AG04450 (cell line): ENCODE measurements at regions of chr5 and their contacts with region 1.

Region 1: GRCh38 chr5:96752341-96753016 is 55.3 kb downstream of the ERAP1 start:
- DNase-seq: peak; percentile 60
- H3K4me3 ChIP-seq: no peak overlapping the region
- H3K27ac ChIP-seq: no peak overlapping the region
- H3K27me3 ChIP-seq: no peaks in the 10 kb centered on the region
- CTCF ChIP-seq: peak; percentile 67

Region 2: GRCh38 chr5:96536991-96537785 is 215.3 kb before region 1 on chr5:
- CTCF ChIA-PET with region 1: no interaction called
- POLR2A ChIA-PET with region 1: no interaction called
- DNase-seq: no peak
- H3K4me3 ChIP-seq: no peak overlapping the region
- H3K27ac ChIP-seq: no peak overlapping the region
- H3K27me3 ChIP-seq: no peaks in the 10 kb centered on the region
- CTCF ChIP-seq: no peak

Region 3: DNA sequence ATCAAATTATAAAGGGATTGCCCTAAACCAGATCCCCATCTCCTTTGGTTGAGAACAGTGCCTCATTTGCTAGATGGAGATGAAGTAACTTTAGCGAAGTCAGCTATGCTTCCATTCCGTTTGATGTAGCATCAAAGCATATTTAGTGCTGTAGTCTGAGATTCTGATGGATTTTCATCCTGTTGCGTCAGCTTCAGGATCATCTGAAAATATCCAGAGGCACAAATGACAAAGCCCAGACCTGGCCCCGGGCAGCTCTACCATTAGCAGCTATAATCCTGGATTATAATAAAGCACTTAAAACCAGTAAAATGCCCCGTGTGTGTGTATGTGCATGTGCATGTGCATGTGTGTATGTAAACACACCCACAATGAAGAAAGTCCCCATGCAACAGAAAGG is 10.5 kb after region 1 on chr5:
- CTCF ChIA-PET with region 1: interaction called, 23 read pairs
- POLR2A ChIA-PET with region 1: no interaction called
- DNase-seq: no peak
- H3K4me3 ChIP-seq: no peak overlapping the region
- H3K27ac ChIP-seq: no peak overlapping the region
- H3K27me3 ChIP-seq: no peaks in the 10 kb centered on the region
- CTCF ChIP-seq: no peak

Region 4: DNA sequence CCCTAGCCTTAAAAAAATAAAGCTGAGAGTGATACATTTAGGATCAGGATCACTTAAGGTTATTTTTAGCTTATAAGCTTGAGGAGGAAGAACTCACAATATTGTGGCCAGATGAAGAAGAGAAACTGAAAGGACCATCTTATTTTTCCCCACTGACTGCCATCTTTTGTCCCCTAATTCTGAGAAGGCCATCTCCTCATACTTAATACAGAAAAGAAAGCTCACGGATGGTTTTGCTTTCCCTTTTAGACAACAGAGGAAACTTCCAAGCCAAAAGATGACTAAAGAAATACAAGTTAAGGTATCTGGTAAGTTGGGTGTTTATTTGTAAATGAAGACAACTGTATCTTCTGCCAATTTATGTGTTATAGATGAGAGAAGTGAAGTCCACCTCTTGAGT is 18.9 kb after region 1 on chr5:
- CTCF ChIA-PET with region 1: interaction called, 28 read pairs
- POLR2A ChIA-PET with region 1: no interaction called
- DNase-seq: no peak
- H3K4me3 ChIP-seq: no peak overlapping the region
- H3K27ac ChIP-seq: no peak overlapping the region
- H3K27me3 ChIP-seq: no peaks in the 10 kb centered on the region
- CTCF ChIP-seq: no peak

Region 5: GRCh38 chr5:96776621-96777020 is 24.1 kb after region 1 on chr5:
- CTCF ChIA-PET with region 1: interaction called, 28 read pairs
- POLR2A ChIA-PET with region 1: no interaction called
- DNase-seq: no peak
- H3K4me3 ChIP-seq: no peak overlapping the region
- H3K27ac ChIP-seq: no peak overlapping the region
- H3K27me3 ChIP-seq: no peaks in the 10 kb centered on the region
- CTCF ChIP-seq: no peak

Region 6: DNA sequence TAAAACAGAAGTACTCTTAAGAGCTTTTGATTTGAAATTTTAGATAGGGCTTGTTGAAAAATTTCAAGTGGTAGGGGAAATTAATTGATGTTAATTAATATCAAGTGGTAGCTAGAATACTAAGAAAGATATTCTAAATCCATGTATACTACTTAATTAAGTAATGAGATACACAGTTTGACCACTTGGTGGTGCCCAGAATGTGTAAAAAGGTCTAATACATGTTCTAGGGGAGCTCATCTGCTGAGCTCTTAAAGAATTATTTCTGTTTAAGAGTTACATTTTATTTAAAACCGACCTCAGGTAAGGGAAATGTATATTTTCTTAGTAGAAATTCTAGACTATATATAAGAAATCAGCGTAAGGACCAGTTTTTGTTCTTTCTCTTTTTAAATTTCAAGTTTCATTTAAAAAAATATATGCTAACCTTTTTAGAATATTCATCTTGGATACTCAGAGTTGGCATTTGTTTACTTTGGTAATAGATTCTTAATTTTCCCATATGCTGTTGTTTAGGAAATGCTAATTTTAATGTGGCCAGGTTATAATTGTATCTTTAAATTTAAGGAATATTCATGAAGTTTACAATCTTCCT is 244.9 kb after region 1 on chr5:
- CTCF ChIA-PET with region 1: interaction called, 10 read pairs
- POLR2A ChIA-PET with region 1: no interaction called
- DNase-seq: no peak
- H3K4me3 ChIP-seq: no peak overlapping the region
- H3K27ac ChIP-seq: no peak overlapping the region
- H3K27me3 ChIP-seq: no peaks in the 10 kb centered on the region
- CTCF ChIP-seq: peak; percentile 51

Region 7: GRCh38 chr5:97142521-97143254 is 390.2 kb after region 1 on chr5 and contains the start of gene LIX1:
- CTCF ChIA-PET with region 1: interaction called, 19 read pairs
- POLR2A ChIA-PET with region 1: no interaction called
- DNase-seq: no peak
- H3K4me3 ChIP-seq: no peak within 1 kb of the TSS
- H3K27ac ChIP-seq: no peak within 1 kb of the TSS
- H3K27me3 ChIP-seq: peaks cover 14% of the 10 kb centered on the region
- CTCF ChIP-seq: peak; percentile 64
- polyA plus RNA-seq, gene LIX1: not detected in 2 replicates

Region 8: GRCh38 chr5:97162045-97162444 is 409.6 kb after region 1 on chr5:
- CTCF ChIA-PET with region 1: interaction called, 58 read pairs
- POLR2A ChIA-PET with region 1: no interaction called
- DNase-seq: peak; percentile 69
- H3K4me3 ChIP-seq: no peak overlapping the region
- H3K27ac ChIP-seq: no peak overlapping the region
- H3K27me3 ChIP-seq: no peaks in the 10 kb centered on the region
- CTCF ChIP-seq: peak; percentile 93